Head of caudate nucleus (tissue), 42 donors: ENCODE measurements at regions of chr6 and their contacts with region 1.

Region 1: GRCh38 chr6:157021344-157021992 is 244.3 kb downstream of the ARID1B start:
- DNase-seq: peak; percentile 81 to 97 (median 92)

Region 2: DNA sequence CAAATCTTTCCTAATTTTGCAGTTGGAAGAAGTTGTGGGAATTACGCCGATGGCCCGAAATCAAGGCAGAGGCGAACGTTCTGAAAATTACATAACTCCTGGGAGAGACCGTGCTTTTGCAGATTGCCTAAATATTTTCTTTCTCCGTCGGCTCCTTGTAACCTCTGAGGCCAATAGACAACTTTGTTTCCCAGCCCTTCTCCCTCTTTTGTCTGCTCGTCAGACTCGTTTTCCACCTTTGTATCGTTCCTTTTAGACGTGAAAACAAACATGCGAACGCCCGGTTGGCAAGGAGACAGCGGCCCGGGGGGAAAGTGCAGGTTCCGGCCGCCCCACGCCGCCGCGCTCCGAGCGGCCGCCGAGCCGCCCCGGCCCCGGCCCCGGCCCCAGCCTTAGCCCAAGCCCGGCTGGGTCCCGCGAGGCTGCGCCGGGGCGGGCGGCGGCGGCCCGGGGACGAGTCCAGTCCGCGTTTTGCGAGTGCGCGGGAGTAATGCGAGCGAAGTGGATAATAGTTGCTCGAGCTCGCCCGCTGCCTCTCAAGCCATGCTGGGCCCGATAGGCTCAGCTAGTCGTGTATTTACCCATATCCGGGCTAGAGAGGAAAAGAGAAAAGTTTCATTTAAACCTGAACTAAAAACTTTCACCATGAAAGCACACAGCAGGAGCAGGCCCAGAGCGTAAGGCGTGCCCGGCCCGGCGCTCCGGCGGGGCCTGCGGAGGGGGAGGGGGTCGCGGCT is 244.5 kb before region 1 on chr6 and contains the start of gene ARID1B:
- intact Hi-C with region 1: loop called (anchors 2 kb)
- DNase-seq: peak; percentile 57 to 92 (median 81)

Region 3: DNA sequence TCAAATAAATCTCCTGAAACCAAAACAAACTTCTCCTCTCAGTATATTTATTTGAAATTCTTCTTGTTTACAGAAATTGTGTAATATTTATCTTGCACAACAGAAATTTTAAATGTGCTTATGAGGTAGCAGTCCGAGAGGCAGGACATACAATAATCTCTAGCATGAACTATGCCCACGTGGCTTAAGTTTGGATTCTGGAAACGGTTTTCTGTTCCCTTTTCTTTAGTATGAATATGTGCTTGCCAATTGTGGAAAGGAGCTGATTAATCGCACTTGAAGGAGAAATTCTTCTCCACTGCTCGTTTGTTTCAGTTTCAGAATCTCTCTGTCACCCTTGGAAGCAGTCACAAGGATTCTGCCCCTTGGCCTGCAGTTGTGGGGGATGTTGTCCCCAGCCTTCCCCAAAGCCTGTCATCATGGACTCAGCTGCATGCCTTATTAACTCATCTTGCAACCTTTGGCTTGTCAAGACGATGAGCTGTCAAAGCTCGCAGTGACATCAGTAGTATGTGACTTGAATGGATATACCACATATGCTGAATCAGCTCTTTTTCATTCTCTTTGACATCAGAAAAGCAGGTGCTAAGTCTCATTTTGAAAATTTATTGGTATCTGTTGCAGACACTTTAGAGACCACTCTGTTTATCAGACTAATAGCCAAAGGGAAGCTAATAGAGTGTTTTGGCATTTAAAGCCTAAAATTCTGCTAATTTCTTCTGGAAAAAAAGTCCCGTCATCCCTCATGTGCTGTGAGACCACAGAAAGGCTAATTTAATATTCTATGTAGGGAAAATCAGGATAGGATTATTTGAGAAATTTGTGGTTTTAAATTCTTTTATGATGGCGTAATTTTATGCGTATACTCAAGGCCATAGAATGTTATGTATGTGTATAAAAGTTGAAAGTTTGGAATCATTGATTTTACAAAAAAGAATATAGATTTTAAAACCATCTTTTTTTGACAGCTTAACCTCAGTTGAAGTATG is 57.5 kb before region 1 on chr6:
- intact Hi-C with region 1: loop called (anchors 10 kb)
- DNase-seq: peak in 5 of 42 donors; percentile 16 to 74 (median 46)